ENCODE measurements at regions of chr14 and their contacts with region 1.

Region 1: GRCh38 chr14:31200702-31200990 is 6.9 kb downstream of the HECTD1 start:
- DNase-seq: no peak
- H3K4me3 ChIP-seq: no peak overlapping the region
- H3K27ac ChIP-seq: no peak overlapping the region
- H3K27me3 ChIP-seq: no peaks in the 10 kb centered on the region
- CTCF ChIP-seq: no peak

Region 2: DNA sequence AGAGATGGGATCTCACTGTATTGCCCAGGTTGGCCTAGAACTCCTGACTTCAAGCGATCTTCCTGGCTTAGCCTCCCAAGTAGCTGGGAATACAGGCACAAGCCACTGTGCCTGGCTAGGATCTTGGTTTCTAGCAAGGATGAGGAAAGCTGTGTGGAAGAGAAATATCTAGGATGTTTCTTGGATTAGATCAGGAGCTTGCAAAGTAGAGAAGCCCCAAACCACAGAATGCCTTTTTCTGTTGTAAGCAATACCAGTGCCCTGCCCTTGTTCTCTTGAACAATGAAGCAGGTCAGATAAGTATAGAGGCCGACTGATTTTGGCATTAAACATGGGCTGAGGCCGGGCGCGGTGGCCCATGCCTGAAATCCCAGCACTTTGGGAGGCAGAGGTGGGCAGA is 130.2 kb before region 1 on chr14:
- CTCF ChIA-PET with region 1: no interaction called
- POLR2A ChIA-PET with region 1: no interaction called
- DNase-seq: peak; percentile 78
- H3K4me3 ChIP-seq: no peak overlapping the region
- H3K27ac ChIP-seq: peak overlapping the region; percentile 75
- H3K27me3 ChIP-seq: no peaks in the 10 kb centered on the region
- CTCF ChIP-seq: no peak

Region 3: DNA sequence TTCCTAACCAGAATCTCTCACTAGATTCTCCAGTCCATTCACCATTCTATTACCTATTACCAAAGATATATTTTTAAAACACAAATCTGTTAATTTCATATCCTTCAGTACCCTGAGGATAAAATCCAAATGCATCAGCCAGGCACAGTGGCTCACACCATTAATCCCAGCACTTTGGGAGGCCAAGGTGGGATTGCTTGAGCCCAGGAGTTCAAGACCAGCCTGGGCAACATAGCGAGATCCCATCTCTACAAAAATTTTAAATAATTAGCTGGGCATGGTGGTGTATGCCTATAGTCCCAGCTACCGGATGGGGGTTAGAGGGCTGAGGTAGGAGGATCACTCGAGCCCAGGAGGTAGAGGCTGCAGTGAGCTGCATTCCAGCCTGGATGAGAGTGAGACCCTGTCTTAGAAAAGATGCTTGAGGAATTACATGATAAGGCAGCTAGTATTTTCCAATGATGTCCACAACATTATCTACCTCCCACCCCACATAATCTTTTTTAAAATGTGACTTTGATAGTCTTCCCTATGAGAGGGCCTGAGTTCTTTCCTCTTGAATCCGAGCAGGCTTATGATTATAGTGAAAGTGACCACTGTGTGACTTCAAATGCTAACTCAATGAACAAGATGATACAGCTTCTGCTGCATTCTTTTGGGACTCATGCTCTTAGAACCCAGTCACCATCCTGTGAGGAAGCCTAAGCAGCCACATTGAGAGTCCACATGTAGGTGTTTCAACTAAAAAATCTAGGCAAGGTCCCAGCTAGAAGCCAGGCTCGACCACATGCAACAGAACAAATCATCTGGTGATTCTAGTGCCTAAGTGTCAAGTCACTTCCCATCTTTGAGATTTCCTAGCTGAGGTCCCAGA is 11.1 kb before region 1 on chr14:
- CTCF ChIA-PET with region 1: interaction called, 10 read pairs
- POLR2A ChIA-PET with region 1: no interaction called
- DNase-seq: no peak
- H3K4me3 ChIP-seq: no peak overlapping the region
- H3K27ac ChIP-seq: no peak overlapping the region
- H3K27me3 ChIP-seq: no peaks in the 10 kb centered on the region
- CTCF ChIP-seq: no peak